ENCODE measurements at regions of chr3 and their contacts with region 1.

Region 1: GRCh38 chr3:37855363-37855970 is 6.2 kb upstream of the CTDSPL start:
- DNase-seq: peak; percentile 79
- H3K4me3 Mint-ChIP-seq: no peak overlapping the region
- H3K27ac Mint-ChIP-seq: no peak overlapping the region
- H3K4me1 Mint-ChIP-seq: peaks cover 6% of the 10 kb centered on the region
- H3K27me3 Mint-ChIP-seq: no peaks in the 10 kb centered on the region

Region 2: DNA sequence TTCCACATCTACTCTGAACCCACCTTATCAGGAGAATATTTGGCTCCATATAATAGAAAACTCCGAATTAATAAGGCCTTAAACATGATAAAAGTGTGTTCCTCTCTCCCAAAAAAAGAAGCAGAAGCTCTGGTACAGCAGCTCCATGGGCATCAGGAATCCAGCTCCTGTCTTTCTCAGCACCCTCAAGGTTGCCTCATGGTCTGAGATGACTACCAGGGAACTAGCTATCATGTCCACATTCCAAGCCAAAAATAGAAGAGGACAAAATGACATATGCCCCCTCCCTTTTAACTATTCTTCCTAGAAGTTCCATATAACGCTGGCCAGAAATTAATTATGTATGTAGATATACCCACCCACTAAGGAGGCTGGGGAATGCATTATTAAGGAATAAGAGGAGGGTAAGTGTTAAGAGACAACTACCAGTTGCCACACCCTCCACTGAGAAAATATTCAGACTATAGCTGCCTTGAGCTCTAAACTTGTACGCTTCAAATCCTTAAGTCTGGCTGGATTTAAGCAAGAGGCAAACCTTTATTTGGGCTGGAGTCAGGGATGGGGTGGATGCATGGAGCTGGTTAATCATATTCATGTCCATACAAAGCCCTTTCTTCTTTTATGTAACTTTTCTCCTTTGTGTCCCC is 29.6 kb before region 1 on chr3:
- CTCF ChIA-PET with region 1: no interaction called
- POLR2A ChIA-PET with region 1: no interaction called
- DNase-seq: no peak
- H3K4me3 Mint-ChIP-seq: no peak overlapping the region
- H3K27ac Mint-ChIP-seq: no peak overlapping the region
- H3K4me1 Mint-ChIP-seq: no peaks in the 10 kb centered on the region
- H3K27me3 Mint-ChIP-seq: peaks cover 12% of the 10 kb centered on the region

Region 3: DNA sequence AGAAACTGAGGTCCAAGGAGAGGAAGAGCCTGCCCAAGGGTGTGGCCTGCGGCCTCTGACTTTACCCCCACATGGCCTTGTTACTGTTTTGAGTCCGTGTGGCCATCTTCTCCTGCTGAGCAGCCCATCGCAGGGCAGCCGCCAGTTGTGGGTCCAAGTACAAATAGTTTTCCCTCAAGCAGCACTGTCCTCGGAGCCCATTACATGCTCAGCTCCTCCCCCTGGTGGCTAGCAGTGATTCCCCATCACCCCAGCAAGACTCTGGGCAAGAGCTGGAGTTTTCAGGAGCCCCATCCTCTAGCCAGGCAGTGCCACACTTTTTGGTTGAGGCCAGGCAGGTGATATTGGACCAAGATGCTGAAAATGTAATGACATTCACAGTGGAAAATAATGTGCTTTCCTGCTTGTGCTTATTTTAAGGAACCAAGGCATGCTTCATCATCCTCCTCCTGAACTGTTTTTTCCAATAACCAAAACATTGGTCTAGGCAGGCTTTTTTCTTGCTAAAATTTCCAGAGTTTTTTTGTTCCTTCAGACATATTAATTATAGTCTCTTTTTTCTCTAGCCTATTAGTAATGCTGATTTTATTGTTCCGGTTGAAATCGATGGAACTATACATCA is 111.9 kb after region 1 on chr3:
- CTCF ChIA-PET with region 1: interaction called, 74 read pairs
- POLR2A ChIA-PET with region 1: no interaction called
- DNase-seq: peak; percentile 71
- H3K4me3 Mint-ChIP-seq: no peak overlapping the region
- H3K27ac Mint-ChIP-seq: no peak overlapping the region
- H3K4me1 Mint-ChIP-seq: no peaks in the 10 kb centered on the region
- H3K27me3 Mint-ChIP-seq: no peaks in the 10 kb centered on the region

Region 4: DNA sequence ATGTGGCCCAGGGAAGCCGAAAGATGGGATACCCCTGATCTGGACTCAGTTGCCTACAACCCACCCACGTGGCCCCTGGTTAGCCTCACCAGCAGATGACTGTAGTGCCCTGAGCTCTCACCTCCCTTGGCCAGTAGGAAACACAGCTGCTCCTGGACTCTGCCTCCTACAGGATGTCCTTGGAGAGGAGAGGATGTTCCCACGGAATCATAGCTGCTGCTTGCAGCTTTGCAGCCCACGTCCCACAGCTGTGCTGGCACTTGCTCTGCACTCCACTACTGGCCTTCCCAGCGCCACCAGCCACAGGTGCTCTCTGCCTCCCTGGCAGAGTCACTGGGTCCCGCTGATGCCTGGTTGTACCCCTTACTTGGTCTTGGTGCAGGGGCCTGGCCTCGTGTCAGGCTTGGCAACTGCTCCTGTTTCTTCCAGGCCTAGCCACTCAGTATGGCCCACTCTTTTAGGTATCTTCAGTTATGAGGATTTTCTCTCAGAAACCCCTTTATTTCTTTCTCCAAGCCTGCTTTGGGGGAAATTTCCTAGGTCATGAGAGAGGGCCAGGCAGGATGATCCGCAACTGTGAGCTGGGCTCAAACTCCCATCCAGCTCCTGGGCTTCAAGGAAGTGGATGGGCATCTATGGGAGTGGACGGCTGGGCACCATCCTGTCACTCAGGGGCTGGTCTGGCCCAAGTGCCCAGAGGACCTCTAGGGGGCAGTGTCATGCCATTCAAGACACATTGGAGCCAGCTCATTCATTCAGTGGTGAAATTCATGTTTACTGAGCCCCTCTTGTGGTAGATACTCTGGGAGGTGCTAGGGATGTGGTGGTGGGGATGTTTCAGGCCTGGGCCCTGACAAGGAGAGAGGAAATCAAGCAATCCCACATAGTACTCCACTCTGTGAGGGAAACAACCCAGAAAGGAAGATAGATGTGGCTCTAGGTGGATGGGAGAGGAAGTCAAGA is 118.9 kb after region 1 on chr3:
- CTCF ChIA-PET with region 1: interaction called, 74 read pairs
- POLR2A ChIA-PET with region 1: no interaction called
- DNase-seq: peak; percentile 78
- H3K4me3 Mint-ChIP-seq: no peak overlapping the region
- H3K27ac Mint-ChIP-seq: no peak overlapping the region
- H3K4me1 Mint-ChIP-seq: peaks cover 6% of the 10 kb centered on the region
- H3K27me3 Mint-ChIP-seq: no peaks in the 10 kb centered on the region